Activated CD4-positive, alpha-beta memory T cell treated with anti-CD3 and anti-CD28 coated beads for 36 hours (primary cell): ENCODE measurements at regions of chr7 and their contacts with region 1.

Region 1: GRCh38 chr7:129875745-129876411 is 76.9 kb downstream of the UBE2H start:
- DNase-seq: no peak
- H3K4me3 Mint-ChIP-seq: no peak overlapping the region
- H3K27ac Mint-ChIP-seq: no peak overlapping the region
- H3K4me1 Mint-ChIP-seq: peaks cover 45% of the 10 kb centered on the region
- H3K27me3 Mint-ChIP-seq: no peaks in the 10 kb centered on the region

Region 2: GRCh38 chr7:129713544-129713943 is 162.3 kb before region 1 on chr7:
- CTCF ChIA-PET with region 1: no interaction called
- POLR2A ChIA-PET with region 1: no interaction called
- intact Hi-C with region 1: no loop called
- DNase-seq: no peak
- H3K4me3 Mint-ChIP-seq: no peak overlapping the region
- H3K27ac Mint-ChIP-seq: no peak overlapping the region
- H3K4me1 Mint-ChIP-seq: no peaks in the 10 kb centered on the region
- H3K27me3 Mint-ChIP-seq: no peaks in the 10 kb centered on the region

Region 3: GRCh38 chr7:129914536-129915272 is 38.8 kb after region 1 on chr7:
- CTCF ChIA-PET with region 1: no interaction called
- POLR2A ChIA-PET with region 1: no interaction called
- intact Hi-C with region 1: loop called (anchors 5 kb)
- DNase-seq: no peak
- H3K4me3 Mint-ChIP-seq: no peak overlapping the region
- H3K27ac Mint-ChIP-seq: no peak overlapping the region
- H3K4me1 Mint-ChIP-seq: peaks cover 56% of the 10 kb centered on the region
- H3K27me3 Mint-ChIP-seq: no peaks in the 10 kb centered on the region

Region 4: DNA sequence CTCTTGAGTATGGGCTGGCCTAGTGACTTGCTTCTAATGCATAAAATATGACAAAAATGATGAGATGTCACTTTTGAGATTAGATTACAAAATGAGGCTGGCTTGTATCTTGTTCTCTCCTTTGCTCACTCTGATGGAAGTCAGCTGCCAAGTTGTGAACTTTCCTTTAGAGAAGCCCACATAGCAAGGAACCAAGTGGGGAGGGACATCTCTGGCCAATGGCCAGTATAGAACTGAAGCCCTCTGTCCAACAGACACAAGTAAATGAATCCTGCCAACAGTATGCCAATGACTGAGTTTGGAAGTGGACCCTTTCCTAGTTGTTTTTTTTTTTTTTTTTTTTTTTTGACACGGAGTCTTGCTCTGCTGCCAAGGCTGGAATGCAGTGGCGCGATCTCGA is 171.9 kb after region 1 on chr7:
- CTCF ChIA-PET with region 1: no interaction called
- POLR2A ChIA-PET with region 1: no interaction called
- intact Hi-C with region 1: no loop called
- DNase-seq: no peak
- H3K4me3 Mint-ChIP-seq: no peak overlapping the region
- H3K27ac Mint-ChIP-seq: no peak overlapping the region
- H3K4me1 Mint-ChIP-seq: peaks cover 13% of the 10 kb centered on the region
- H3K27me3 Mint-ChIP-seq: no peaks in the 10 kb centered on the region

Region 5: DNA sequence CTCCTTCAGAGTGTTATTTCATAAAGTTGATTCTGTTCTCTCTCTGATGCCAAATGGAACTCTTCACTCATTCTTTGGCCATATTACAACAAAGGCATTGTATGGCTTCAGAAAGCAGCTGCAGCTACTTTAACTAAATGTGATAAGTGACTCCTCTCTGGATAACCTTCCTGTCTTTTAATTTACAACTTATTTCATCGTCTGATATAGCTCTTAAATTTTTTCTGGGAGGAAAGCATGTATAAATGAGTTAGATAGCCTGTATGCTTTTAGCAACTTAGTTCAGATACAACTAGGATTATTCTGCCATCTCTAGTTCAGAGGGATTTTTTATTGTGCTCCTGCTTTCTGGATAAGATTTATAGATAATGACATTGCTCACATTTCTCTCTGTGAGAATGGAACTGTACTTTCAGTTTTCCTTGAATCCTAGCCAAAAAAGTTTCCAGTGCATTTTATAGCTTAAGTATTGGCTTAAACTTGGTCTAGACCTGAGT is 252.0 kb after region 1 on chr7:
- CTCF ChIA-PET with region 1: no interaction called
- POLR2A ChIA-PET with region 1: no interaction called
- intact Hi-C with region 1: no loop called
- DNase-seq: no peak
- H3K4me3 Mint-ChIP-seq: no peak overlapping the region
- H3K27ac Mint-ChIP-seq: no peak overlapping the region
- H3K4me1 Mint-ChIP-seq: no peaks in the 10 kb centered on the region
- H3K27me3 Mint-ChIP-seq: no peaks in the 10 kb centered on the region